ENCODE measurements at regions of chr4 and their contacts with region 1.

Region 1: GRCh38 chr4:174005422-174005821 is 278.0 kb downstream of the FBXO8 start:
- DNase-seq: no peak
- ATAC-seq: no peak
- H3K4me3 ChIP-seq: no peak overlapping the region
- H3K27ac ChIP-seq: no peak overlapping the region
- H3K4me1 ChIP-seq: no peaks in the 10 kb centered on the region
- H3K27me3 ChIP-seq: peaks cover 27% of the 10 kb centered on the region
- CTCF ChIP-seq: no peak
- POLR2A ChIP-seq: no peak
- RAD21 ChIP-seq: no peak

Region 2: GRCh38 chr4:173685165-173685830 is 320.1 kb before region 1 on chr4:
- CTCF ChIA-PET with region 1: no interaction called
- POLR2A ChIA-PET with region 1: no interaction called
- RAD21 ChIA-PET with region 1: no interaction called
- intact Hi-C with region 1: no loop called
- DNase-seq: no peak
- ATAC-seq: no peak
- H3K4me3 ChIP-seq: no peak overlapping the region
- H3K27ac ChIP-seq: no peak overlapping the region
- H3K4me1 ChIP-seq: no peaks in the 10 kb centered on the region
- H3K27me3 ChIP-seq: peaks cover 23% of the 10 kb centered on the region
- CTCF ChIP-seq: no peak
- POLR2A ChIP-seq: no peak
- RAD21 ChIP-seq: no peak

Region 3: DNA sequence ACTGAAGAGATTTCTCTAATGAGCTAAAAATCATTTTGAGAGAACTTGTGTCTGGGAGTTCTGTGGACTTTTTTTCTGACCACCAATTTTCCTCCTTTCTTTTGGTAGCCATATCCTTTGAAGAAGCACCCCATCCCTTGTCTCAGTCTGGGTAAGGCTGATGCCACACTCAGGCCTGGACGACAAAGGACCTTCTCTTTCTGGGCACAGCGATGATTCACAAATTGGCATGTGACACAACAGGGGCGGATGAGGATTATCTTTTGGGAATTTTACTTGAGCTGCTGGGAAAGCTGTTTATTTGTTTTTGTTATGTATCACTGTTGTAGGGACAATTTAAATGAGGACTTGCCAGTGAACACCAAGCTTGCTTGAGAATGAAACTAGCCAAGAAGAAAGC is 242.0 kb before region 1 on chr4:
- CTCF ChIA-PET with region 1: no interaction called
- POLR2A ChIA-PET with region 1: no interaction called
- RAD21 ChIA-PET with region 1: no interaction called
- intact Hi-C with region 1: no loop called
- DNase-seq: no peak
- ATAC-seq: no peak
- H3K4me3 ChIP-seq: no peak overlapping the region
- H3K27ac ChIP-seq: no peak overlapping the region
- H3K4me1 ChIP-seq: no peaks in the 10 kb centered on the region
- H3K27me3 ChIP-seq: peaks cover 20% of the 10 kb centered on the region; the same call in 1 of the 2 replicates
- CTCF ChIP-seq: no peak
- POLR2A ChIP-seq: no peak
- RAD21 ChIP-seq: no peak

Region 4: DNA sequence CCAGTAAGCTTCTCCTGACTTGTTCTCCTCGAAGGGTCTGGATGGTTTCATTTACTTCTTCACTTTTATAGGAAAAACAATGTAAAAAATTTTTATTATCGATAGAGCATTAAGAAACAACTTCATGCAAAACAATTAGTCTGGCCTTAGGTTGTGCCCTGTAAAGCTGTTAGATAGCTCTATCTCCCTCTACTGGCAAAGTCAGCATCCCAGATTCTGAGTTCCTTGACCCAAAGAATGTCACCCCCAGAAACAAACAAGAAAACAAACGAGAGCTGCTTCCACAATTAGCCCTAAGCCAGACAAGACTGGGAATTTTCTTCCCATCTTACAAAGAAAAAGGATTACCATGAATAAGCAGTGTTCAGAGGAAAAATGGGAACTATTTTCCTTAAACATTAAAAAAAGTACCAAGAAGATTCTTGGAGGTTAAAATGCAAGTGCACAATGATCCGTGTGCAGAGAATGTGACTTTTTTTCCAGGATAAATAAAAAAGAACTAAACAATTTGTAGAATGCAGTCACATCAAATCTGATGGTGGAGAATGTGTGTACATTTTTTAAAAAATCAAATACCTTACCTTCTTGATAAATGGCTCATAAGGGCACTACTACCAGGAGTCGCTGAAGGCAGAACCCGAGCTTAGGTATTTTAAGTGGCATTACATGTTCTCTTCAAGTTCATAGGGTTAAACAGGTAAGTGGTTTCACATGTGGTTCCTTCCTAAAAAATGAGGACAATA is 15.1 kb before region 1 on chr4:
- CTCF ChIA-PET with region 1: interaction called, 14 read pairs
- POLR2A ChIA-PET with region 1: no interaction called
- RAD21 ChIA-PET with region 1: no interaction called
- intact Hi-C with region 1: no loop called
- DNase-seq: peak; percentile 24
- ATAC-seq: peak; percentile 66
- H3K4me3 ChIP-seq: no peak overlapping the region
- H3K27ac ChIP-seq: no peak overlapping the region
- H3K4me1 ChIP-seq: no peaks in the 10 kb centered on the region
- H3K27me3 ChIP-seq: peaks cover 12% of the 10 kb centered on the region
- CTCF ChIP-seq: peak; percentile 10 to 61 (median 57); a peak in 4 of 6 replicates
- POLR2A ChIP-seq: no peak
- RAD21 ChIP-seq: peak; percentile 51

Measured in HCT116 (cell line).